PC-9 (cell line): ENCODE measurements at regions of chr9 and their contacts with region 1.

Region 1: GRCh38 chr9:6757456-6758247 is at the start of gene KDM4C:
- DNase-seq: peak; percentile 72 to 86
- H3K4me3 ChIP-seq: peak within 1 kb of the TSS; percentile 86
- H3K27ac ChIP-seq: peak within 1 kb of the TSS; percentile 92
- H3K4me1 ChIP-seq: peaks cover 12% of the 10 kb centered on the region
- H3K27me3 ChIP-seq: no peaks in the 10 kb centered on the region
- CTCF ChIP-seq: no peak
- total RNA-seq, gene KDM4C: 11.6 and 12.9 TPM in 2 replicates

Region 2: DNA sequence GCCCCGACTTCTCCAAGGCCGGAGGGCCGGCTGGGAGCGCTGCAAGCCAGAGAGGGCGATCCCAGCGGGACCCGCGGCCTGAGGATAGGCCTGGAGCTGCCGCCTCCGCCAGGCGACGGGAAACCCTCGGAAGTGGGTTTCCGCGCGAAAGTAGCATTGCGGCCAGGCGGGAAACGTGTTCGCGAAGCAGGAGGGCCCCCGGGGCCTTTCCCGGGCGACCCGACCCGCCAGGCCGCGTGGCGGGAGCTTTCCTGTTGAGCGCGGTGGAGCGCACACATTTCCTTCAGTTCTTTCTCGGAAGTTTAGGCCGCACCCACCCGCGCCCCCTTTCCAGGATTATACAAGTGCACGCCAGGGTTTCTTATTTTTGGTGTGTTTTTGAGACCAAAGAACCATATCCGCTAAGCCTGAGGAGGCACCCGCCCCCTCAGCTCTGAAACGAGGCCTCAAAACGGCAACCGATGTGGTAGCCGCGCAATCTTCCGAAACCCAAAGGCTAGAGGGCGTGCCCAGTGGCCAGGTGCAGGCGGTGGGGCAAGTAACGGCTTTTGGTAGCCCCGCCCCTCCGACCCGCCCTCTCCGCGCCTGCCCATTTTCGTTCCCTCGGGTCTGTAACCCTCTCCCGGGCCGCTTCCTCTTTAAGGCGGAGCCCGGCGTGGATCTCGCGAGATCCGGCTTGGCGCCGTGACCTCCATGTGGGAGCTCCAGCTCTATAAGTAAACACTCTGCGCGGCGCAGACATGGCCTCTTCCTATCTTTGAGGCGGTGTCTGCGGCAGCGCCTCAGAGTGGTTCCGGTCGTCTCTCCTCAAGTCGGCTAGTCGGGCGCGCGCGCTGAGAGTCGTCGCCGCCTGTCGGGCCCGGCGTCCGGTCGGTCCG is 344.9 kb before region 1 on chr9 and contains the start of gene UHRF2:
- CTCF ChIA-PET with region 1: no interaction called
- POLR2A ChIA-PET with region 1: no interaction called
- intact Hi-C with region 1: loop called (anchors 5 kb)
- DNase-seq: peak; percentile 82 to 87
- H3K4me3 ChIP-seq: peak within 1 kb of the TSS; percentile 79
- H3K27ac ChIP-seq: peak within 1 kb of the TSS; percentile 5; the same call in 1 of the 2 replicates
- H3K4me1 ChIP-seq: peaks cover 11% of the 10 kb centered on the region
- H3K27me3 ChIP-seq: no peaks in the 10 kb centered on the region
- CTCF ChIP-seq: no peak
- total RNA-seq, gene UHRF2: 32.6 and 40.9 TPM in 2 replicates

Region 3: DNA sequence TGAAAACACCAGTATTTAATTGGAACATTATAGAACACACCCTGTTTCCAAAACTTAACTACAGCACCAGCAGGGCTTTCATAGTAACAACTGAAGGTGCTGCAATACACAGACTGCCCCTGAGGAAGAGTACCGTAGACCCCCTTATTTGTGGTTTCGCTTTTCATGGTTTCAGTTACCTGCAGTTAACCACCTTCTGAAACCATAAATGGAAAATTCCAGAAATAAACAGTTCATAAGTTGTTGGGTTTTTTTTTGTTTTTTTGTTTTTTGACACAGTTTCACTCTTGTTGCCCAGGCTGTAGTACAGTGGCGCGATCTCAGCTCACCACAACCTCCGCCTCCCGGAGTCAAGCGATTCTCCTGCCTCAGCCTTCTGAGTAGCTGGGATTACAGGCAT is 102.6 kb before region 1 on chr9:
- CTCF ChIA-PET with region 1: no interaction called
- POLR2A ChIA-PET with region 1: no interaction called
- intact Hi-C with region 1: no loop called
- DNase-seq: no peak
- H3K4me3 ChIP-seq: no peak overlapping the region
- H3K27ac ChIP-seq: no peak overlapping the region
- H3K4me1 ChIP-seq: no peaks in the 10 kb centered on the region
- H3K27me3 ChIP-seq: no peaks in the 10 kb centered on the region
- CTCF ChIP-seq: no peak

Region 4: GRCh38 chr9:6779417-6780241 is 22.0 kb after region 1 on chr9:
- CTCF ChIA-PET with region 1: no interaction called
- POLR2A ChIA-PET with region 1: interaction called, 12 read pairs
- intact Hi-C with region 1: no loop called
- DNase-seq: peak in 1 of 2 experiments; percentile 50
- H3K4me3 ChIP-seq: no peak overlapping the region
- H3K27ac ChIP-seq: no peak overlapping the region
- H3K4me1 ChIP-seq: no peaks in the 10 kb centered on the region
- H3K27me3 ChIP-seq: no peaks in the 10 kb centered on the region
- CTCF ChIP-seq: no peak